Activated CD4-positive, alpha-beta T cell treated with anti-CD3 and anti-CD28 coated beads for 36 hours (primary cell): ENCODE measurements at regions of chr6 and their contacts with region 1.

Region 1: DNA sequence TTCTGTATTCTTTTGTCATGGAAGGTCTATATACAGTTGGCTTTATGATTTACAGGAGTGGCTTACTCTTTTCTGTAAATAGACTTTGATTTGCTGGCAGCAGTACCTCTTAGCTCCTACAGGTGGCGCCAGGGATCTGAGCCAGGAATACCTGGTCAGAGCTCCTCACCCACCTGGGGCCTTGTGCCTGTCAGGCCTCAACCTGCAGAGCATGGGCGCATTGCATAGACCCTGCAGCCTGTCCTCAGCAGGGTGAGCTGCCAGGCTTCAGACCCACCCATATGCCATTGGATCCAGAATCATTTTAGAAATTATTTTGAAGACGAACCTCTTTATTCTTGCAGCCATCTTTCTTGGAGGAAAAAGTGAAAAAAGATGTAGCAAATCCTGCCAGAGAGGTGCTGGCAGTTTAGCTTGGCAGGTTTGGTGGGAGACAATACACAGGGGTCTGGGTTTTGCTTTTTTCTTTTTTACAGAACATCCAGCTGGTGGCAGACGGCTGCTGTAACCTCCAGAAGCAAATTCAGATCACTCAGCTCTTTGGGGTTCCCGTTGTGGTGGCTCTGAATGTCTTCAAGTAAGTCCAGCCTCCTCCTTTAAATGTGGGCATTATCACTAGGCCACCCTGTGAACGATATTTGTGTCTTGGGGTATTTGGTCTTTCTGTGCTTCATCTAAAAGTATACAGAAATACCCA is 149.1 kb downstream of the MTHFD1L start:
- DNase-seq: peak; percentile 75
- ATAC-seq: peak; percentile 61
- H3K4me3 Mint-ChIP-seq: no peak overlapping the region
- H3K27ac Mint-ChIP-seq: no peak overlapping the region
- H3K4me1 Mint-ChIP-seq: peaks cover 1% of the 10 kb centered on the region
- H3K27me3 Mint-ChIP-seq: no peaks in the 10 kb centered on the region

Region 2: DNA sequence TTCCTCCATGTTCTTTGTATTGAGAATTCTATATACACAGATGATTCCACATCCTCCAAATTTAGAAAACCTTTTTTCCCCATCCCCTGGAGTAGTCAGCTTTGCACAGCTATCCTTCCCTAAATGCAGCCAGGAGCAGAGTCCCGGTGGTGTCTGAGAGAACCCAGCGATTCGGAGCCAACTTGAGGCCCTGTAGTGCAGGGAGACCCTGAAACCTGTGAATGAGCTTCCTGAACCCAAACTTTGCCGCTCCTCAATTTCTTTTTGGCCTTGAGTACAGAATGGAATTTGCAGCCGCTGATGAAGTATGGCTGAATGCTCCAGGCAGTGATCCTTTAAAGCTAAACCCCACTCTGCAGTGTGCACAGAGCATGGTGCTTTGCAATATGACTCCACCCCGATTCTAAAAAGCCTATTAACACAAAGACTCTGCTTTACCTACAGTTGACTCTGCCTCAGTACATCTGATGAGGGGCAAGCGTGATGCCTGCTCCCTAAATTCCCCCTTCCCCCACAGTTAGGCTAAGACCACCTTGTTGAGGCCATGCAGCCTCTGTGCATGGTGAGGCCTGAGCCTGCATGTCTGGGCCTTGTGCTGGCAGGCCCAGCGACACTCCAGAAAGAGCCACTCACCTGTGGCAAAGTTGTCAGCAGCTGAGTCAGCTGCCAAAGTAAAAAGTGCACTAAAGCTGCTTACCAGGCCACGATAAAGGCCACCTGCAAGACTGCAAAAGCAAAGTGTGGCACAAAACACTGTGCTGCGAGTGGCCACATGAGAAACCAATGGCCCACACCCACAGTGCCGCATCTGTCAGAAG is 332.8 kb before region 1 on chr6:
- CTCF ChIA-PET with region 1: no interaction called
- POLR2A ChIA-PET with region 1: no interaction called
- intact Hi-C with region 1: no loop called
- DNase-seq: no peak
- ATAC-seq: no peak
- H3K4me3 Mint-ChIP-seq: no peak overlapping the region
- H3K27ac Mint-ChIP-seq: no peak overlapping the region
- H3K4me1 Mint-ChIP-seq: no peaks in the 10 kb centered on the region
- H3K27me3 Mint-ChIP-seq: peaks cover 5% of the 10 kb centered on the region

Region 3: GRCh38 chr6:150898399-150899170 is 116.0 kb before region 1 on chr6:
- CTCF ChIA-PET with region 1: no interaction called
- POLR2A ChIA-PET with region 1: no interaction called
- intact Hi-C with region 1: no loop called
- DNase-seq: no peak
- ATAC-seq: no peak
- H3K4me3 Mint-ChIP-seq: no peak overlapping the region
- H3K27ac Mint-ChIP-seq: no peak overlapping the region
- H3K4me1 Mint-ChIP-seq: peaks cover 23% of the 10 kb centered on the region
- H3K27me3 Mint-ChIP-seq: no peaks in the 10 kb centered on the region

Region 4: DNA sequence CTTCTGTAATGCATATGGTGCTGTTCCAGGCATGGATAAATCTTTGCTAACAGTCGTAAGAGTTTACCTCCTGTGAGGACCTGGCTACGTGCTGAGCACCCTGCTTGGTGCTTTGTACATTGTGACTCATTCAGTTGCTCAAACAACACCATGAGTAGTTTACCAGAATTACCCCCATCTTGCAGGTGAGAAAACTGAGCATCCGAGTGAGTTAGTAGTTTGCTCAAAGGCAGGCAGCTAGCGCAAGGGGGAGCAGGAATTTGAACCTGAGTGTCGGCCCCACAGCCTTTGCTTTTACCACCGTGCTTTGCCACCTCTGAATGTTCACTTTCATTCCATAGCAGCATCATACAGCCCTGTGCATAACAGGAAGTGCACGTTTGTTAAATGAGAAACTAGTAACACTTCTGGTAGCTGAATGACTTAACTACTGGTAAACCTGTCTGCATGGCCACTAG is 27.2 kb before region 1 on chr6:
- CTCF ChIA-PET with region 1: interaction called, 10 read pairs
- POLR2A ChIA-PET with region 1: no interaction called
- intact Hi-C with region 1: no loop called
- DNase-seq: peak; percentile 75
- ATAC-seq: peak; percentile 95
- H3K4me3 Mint-ChIP-seq: peak overlapping the region; percentile 32
- H3K27ac Mint-ChIP-seq: peak overlapping the region; percentile 94
- H3K4me1 Mint-ChIP-seq: peaks cover 15% of the 10 kb centered on the region
- H3K27me3 Mint-ChIP-seq: no peaks in the 10 kb centered on the region

Region 5: GRCh38 chr6:151025076-151025475 is 10.5 kb after region 1 on chr6:
- CTCF ChIA-PET with region 1: interaction called, 26 read pairs
- POLR2A ChIA-PET with region 1: no interaction called
- intact Hi-C with region 1: no loop called
- DNase-seq: no peak
- ATAC-seq: no peak
- H3K4me3 Mint-ChIP-seq: no peak overlapping the region
- H3K27ac Mint-ChIP-seq: no peak overlapping the region
- H3K4me1 Mint-ChIP-seq: peaks cover 5% of the 10 kb centered on the region
- H3K27me3 Mint-ChIP-seq: no peaks in the 10 kb centered on the region

Region 6: DNA sequence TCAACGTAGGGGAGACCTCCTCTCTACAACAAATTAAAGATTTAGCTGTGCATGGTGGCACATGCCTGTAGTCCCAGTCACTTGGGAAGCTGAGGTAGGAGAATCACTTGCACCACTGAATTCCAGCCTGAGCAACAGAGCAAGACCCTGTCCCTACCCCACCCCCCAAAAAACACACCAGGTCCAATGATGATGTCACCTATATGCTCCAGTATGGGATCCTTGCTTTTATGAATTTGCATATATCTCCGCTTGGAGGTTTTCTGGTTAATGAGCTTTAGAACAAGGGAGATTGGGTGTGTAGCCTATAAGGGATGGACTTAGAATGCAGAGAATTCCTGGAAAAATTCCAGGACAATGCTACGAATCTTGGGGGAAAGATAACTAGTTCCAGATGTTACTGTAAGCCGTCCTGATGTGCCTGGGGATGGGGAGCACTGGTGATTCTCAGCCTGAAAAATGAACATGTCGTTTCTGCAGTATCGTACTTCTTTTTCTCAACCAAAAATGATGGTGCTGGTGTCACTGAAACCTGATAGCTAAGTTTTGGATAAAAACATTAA is 315.7 kb after region 1 on chr6:
- CTCF ChIA-PET with region 1: interaction called, 161 read pairs
- POLR2A ChIA-PET with region 1: interaction called, 4 read pairs
- intact Hi-C with region 1: loop called (anchors 1 kb)
- DNase-seq: no peak
- ATAC-seq: no peak
- H3K4me3 Mint-ChIP-seq: no peak overlapping the region
- H3K27ac Mint-ChIP-seq: no peak overlapping the region
- H3K4me1 Mint-ChIP-seq: peaks cover 8% of the 10 kb centered on the region
- H3K27me3 Mint-ChIP-seq: peaks cover 21% of the 10 kb centered on the region

Region 7: GRCh38 chr6:151482290-151482689 is 467.7 kb after region 1 on chr6:
- CTCF ChIA-PET with region 1: no interaction called
- POLR2A ChIA-PET with region 1: no interaction called
- intact Hi-C with region 1: loop called in 1 of 2 experiments (anchors 10 kb)
- DNase-seq: no peak
- ATAC-seq: peak; percentile 51
- H3K4me3 Mint-ChIP-seq: peak overlapping the region; percentile 57
- H3K27ac Mint-ChIP-seq: peak overlapping the region; percentile 93
- H3K4me1 Mint-ChIP-seq: peaks cover 20% of the 10 kb centered on the region
- H3K27me3 Mint-ChIP-seq: no peaks in the 10 kb centered on the region